PC-3 (cell line): ENCODE measurements at regions of chr20 and their contacts with region 1.

Region 1: DNA sequence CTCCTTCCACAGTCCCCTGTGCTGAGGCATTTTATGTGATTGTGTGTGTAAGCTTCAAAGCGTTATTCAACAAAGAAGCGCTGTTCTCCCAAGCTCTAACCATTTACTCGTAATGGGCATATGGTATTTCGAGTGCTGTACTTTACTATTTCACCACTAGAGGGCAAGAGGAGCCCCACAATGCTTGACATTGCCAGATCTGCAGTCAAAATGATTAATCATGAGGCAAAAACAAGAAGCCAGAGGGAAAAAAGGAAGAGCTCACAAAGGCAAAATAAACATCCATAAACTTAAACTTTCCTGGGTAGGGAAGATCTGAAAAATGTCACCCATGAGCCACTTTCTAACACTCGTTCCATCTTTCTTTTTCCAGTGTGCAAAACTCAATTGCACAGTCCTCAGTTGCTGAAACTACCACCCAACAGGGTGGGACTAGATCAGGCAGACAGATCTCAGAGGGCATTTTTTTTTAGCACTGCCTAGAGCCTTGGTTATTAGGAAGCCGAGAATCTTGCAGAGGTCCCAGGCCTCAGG is 215.0 kb upstream of the PLCB4 start:
- DNase-seq: peak; percentile 94
- ATAC-seq: peak; percentile 86
- H3K4me3 ChIP-seq: no peak overlapping the region
- H3K27ac ChIP-seq: peak overlapping the region; percentile 10; the same call in 1 of the 2 replicates
- H3K4me1 ChIP-seq: peaks cover 22% of the 10 kb centered on the region
- H3K27me3 ChIP-seq: no peaks in the 10 kb centered on the region
- CTCF ChIP-seq: peak; percentile 94

Region 2: DNA sequence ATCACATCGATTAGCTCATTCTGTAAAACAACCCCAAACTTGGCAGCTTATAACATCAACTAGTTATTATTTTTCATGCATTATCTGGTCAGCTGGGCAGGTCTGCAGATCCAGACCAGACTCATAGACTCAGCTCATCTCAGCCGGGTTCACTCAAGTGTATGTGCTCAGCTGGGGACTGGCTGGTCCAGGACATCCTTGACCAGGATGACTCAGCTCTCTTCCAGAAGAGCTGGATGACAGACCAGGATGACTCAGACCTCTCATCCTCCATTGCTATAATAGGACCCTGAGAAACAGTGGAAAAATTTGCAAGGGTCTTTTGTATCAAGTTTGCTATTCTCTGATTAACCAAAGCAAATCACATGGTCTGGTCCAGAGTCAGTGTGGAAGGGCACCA is 97.5 kb before region 1 on chr20:
- CTCF ChIA-PET with region 1: interaction called, 6 read pairs
- POLR2A ChIA-PET with region 1: no interaction called
- intact Hi-C with region 1: loop called (anchors 5 kb)
- DNase-seq: peak; percentile 77
- ATAC-seq: peak; percentile 94
- H3K4me3 ChIP-seq: no peak overlapping the region
- H3K27ac ChIP-seq: no peak overlapping the region
- H3K4me1 ChIP-seq: no peaks in the 10 kb centered on the region; the same call in 1 of the 2 replicates
- H3K27me3 ChIP-seq: no peaks in the 10 kb centered on the region
- CTCF ChIP-seq: no peak

Region 3: DNA sequence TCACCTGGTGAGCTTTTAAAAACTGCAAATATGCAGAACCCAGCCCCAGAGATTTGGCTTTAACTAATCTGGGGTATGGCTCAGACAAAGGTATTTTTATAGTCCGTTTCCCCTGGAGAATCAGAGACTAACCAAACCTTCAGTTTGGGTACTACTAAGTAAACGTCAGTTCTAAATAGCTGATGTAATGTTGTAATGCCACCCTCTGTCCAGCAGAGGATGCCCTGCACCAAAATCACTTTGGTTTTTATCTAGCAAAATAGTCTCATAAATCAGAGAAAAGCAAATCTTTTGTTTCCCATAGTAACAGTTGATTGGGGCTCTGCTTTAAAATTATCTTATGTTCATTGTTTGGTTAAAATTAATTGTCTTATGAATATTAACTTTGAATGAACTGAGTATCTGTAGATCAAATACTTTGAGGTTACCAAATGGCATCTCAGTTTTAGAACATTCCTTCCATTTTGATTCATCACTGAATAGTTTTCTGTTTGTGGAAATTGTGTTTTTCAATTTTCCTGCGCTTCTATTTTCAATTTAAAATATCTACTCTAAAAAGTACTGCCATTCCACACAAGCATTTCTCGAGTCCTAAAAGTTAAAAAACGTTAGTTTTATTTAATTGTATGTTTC is 63.3 kb before region 1 on chr20:
- CTCF ChIA-PET with region 1: interaction called, 10 read pairs
- POLR2A ChIA-PET with region 1: no interaction called
- intact Hi-C with region 1: loop called (anchors 2 kb)
- DNase-seq: peak; percentile 81
- ATAC-seq: peak; percentile 70
- H3K4me3 ChIP-seq: no peak overlapping the region
- H3K27ac ChIP-seq: no peak overlapping the region
- H3K4me1 ChIP-seq: no peaks in the 10 kb centered on the region
- H3K27me3 ChIP-seq: no peaks in the 10 kb centered on the region
- CTCF ChIP-seq: peak; percentile 98

Region 4: GRCh38 chr20:9215539-9215938 is 361.7 kb after region 1 on chr20:
- CTCF ChIA-PET with region 1: interaction called, 3 read pairs
- POLR2A ChIA-PET with region 1: no interaction called
- intact Hi-C with region 1: loop called (anchors 10 kb)
- DNase-seq: peak; percentile 59
- ATAC-seq: peak; percentile 13; the same call in 1 of the 2 replicates
- H3K4me3 ChIP-seq: no peak overlapping the region
- H3K27ac ChIP-seq: no peak overlapping the region
- H3K4me1 ChIP-seq: peaks cover 7% of the 10 kb centered on the region
- H3K27me3 ChIP-seq: no peaks in the 10 kb centered on the region
- CTCF ChIP-seq: peak; percentile 84

Region 5: GRCh38 chr20:9294053-9294452 is 440.2 kb after region 1 on chr20:
- CTCF ChIA-PET with region 1: interaction called, 12 read pairs
- POLR2A ChIA-PET with region 1: no interaction called
- intact Hi-C with region 1: loop called (anchors 1 kb)
- DNase-seq: peak; percentile 87
- ATAC-seq: peak; percentile 98
- H3K4me3 ChIP-seq: no peak overlapping the region
- H3K27ac ChIP-seq: no peak overlapping the region
- H3K4me1 ChIP-seq: peaks cover 22% of the 10 kb centered on the region
- H3K27me3 ChIP-seq: no peaks in the 10 kb centered on the region
- CTCF ChIP-seq: no peak

Region 6: DNA sequence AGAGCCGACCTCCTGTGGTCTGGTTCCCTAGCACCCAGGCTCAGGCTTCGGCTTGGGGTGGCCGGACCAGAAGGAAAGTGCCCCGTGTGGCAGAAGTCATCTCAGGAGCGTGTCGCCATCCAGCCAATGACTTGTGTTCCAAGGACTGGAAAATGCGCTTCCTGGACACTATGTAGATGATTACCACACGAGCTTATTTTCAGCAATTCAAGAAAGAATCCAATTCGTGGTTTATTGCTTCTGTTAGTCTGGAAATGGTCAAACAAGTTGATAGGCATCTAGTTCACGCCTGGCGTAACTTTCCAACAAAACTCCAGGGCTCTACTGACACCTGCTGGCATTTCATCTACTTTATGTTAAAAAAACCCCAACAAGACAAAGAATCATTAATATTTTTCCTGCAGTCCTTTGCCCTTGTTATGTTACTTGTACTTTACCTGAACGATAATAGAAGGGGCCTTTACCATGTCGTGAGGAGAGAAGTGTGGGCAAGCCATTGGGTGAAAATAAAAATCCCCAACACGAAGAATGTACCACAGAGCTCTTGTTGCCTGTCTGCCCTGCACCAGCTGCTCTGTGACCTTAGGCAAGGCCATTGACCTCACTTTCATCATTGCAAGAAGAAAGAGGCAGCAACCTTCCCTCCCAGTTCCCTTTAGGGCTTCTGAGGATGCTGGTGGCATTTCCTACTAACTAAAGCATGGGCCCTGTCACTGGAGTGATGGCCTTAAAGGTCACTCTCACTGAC is 505.9 kb after region 1 on chr20:
- CTCF ChIA-PET with region 1: interaction called, 10 read pairs
- POLR2A ChIA-PET with region 1: no interaction called
- intact Hi-C with region 1: loop called (anchors 1 kb)
- DNase-seq: peak; percentile 78
- ATAC-seq: peak; percentile 78
- H3K4me3 ChIP-seq: no peak overlapping the region
- H3K27ac ChIP-seq: no peak overlapping the region
- H3K4me1 ChIP-seq: no peaks in the 10 kb centered on the region
- H3K27me3 ChIP-seq: no peaks in the 10 kb centered on the region
- CTCF ChIP-seq: peak; percentile 85

Region 7: DNA sequence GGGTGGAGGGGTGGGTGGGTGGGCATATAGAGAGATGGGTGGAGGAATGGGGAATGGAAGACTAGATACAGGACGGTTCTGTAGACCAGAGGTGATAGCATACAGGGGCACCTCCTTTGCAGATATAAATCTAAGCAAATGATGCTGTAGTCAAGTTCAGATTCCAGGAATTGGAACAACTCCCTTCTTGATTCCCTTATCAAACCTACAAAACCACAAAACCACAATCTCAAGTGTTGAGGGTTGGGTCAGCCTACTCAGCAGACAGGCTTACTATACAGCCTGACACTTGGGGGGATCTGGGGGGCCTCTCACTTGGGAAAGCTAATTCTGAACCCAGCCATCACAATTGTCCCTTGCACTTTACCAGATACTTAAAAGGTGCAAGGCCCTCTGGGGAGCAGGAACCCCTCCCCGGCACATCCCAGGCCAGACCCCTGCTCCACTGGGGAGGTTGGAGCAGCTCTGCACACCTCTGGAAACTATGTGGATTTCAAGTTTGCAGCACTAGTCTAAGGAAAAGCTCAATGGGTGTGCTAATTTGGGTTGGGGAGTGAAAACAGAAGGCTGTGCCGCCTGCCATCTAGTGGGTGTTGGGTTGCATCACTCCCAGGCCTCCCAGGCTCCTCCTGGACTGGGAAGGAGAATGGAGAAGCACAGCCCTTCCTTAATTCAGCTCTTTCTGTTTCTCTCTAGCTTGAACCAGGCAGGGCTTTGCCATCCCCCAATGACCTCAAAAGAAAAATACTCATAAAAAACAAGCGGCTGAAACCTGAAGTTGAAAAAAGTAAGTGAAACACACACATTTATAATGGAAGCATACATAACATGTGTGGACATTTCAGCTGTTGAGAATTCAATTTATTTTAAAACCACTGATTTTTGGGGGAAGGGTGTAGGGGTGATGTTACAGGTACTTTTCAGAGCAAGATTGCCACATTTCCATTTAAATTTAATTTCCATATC is 539.3 kb after region 1 on chr20:
- CTCF ChIA-PET with region 1: interaction called, 22 read pairs
- POLR2A ChIA-PET with region 1: no interaction called
- intact Hi-C with region 1: no loop called
- DNase-seq: peak; percentile 82
- ATAC-seq: peak; percentile 99
- H3K4me3 ChIP-seq: no peak overlapping the region
- H3K27ac ChIP-seq: no peak overlapping the region
- H3K4me1 ChIP-seq: no peaks in the 10 kb centered on the region
- H3K27me3 ChIP-seq: no peaks in the 10 kb centered on the region
- CTCF ChIP-seq: peak; percentile 93